ENCODE measurements at regions of chr22 and their contacts with region 1.

Region 1: GRCh38 chr22:37887610-37888378 is 18.3 kb upstream of the MICALL1 start:
- DNase-seq: peak; percentile 90
- H3K4me3 ChIP-seq: no peak overlapping the region
- H3K27ac ChIP-seq: peak overlapping the region; percentile 75 to 80
- H3K4me1 ChIP-seq: peaks cover 8% of the 10 kb centered on the region
- H3K27me3 ChIP-seq: no peaks in the 10 kb centered on the region
- CTCF ChIP-seq: peak; percentile 10 to 72 (median 46)
- POLR2A ChIP-seq: no peak

Region 2: DNA sequence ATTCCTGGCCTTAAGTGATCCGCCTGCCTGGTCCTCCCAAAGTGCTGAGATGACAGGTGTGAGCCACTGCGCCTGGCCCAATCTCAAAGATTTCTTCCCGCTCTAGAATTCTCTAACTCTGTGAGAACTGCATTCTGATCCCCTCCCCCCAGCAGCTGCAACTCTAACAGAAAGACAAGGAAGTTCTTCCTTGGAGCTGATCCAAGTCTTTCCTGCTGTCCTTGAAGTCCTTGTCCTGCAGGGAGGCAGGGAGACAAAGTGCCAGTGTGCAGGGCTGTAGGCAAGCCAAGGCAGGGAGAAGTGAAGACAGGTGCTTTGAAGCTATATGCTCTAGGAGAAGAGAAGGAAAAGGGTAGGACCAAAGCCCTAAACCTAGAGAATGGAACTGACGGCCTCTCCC is 288.6 kb before region 1 on chr22:
- intact Hi-C with region 1: no loop called
- DNase-seq: peak; percentile 62
- H3K4me3 ChIP-seq: no peak overlapping the region
- H3K27ac ChIP-seq: peak overlapping the region in 1 of 2 donors; percentile 31
- H3K4me1 ChIP-seq: no peaks in the 10 kb centered on the region
- H3K27me3 ChIP-seq: no peaks in the 10 kb centered on the region
- CTCF ChIP-seq: no peak
- POLR2A ChIP-seq: no peak

Region 3: GRCh38 chr22:37953437-37954179 is 65.8 kb after region 1 on chr22 and contains the starts of genes C22orf23 and POLR2F:
- intact Hi-C with region 1: loop called (anchors 5 kb)
- DNase-seq: peak; percentile 93
- H3K4me3 ChIP-seq: peak within 1 kb of the TSS; percentile 60 to 81
- H3K27ac ChIP-seq: peak within 1 kb of the TSS; percentile 41 to 43
- H3K4me1 ChIP-seq: no peaks in the 10 kb centered on the region
- H3K27me3 ChIP-seq: no peaks in the 10 kb centered on the region
- CTCF ChIP-seq: peak in 1 of 4 experiments; percentile 29
- POLR2A ChIP-seq: peak; percentile 55
- total RNA-seq, gene C22orf23: 9.7 TPM in 1 of 2 donors, not detected in the other
- total RNA-seq, gene POLR2F: 63.1 to 157 TPM

Measured in prostate gland (tissue), 2 donors.